ENCODE measurements at regions of chr5 and their contacts with region 1.

Region 1: DNA sequence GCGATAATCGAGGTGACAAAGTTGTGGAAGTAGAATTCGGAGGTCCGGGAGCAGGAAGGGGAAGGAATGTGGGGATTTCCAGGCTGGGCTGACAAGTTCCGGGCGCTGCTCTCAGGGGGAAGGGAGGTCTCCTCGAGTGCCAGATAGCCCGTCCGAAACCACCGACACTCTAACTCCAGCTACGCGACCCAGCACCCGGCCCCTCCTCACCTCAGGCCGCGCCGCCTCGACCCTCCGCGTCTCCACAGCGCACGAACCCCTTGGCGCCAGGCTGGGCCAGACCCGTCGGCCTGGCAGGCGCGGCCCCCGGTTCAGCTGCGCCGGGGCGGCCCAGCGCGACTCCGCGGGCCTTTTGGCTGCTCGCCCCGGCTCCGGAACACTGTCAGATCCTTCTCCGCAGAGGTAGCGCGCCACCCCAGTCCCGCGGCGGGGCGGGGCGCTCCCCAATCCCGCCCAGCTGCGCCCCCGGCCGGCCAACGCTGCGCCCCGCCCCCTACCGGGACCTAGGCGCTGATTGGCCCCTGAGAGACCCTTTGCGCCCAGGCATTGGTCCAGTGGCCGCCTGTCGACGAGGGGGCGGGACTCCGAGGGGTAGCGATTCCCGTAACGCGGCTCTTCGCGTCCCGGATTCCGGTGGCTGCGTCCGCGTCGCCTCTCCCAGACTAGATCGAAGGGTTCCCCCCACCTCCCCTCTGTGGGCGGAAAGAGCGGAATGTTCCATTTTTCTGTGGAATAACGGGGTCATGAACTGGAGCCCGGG is at the start of gene IL6ST:
- DNase-seq: peak; percentile 98
- ATAC-seq: peak; percentile 90
- H3K4me3 Mint-ChIP-seq: peak within 1 kb of the TSS; percentile 86
- H3K27ac Mint-ChIP-seq: peak within 1 kb of the TSS; percentile 97
- H3K4me1 Mint-ChIP-seq: peaks cover 60% of the 10 kb centered on the region
- H3K27me3 Mint-ChIP-seq: no peaks in the 10 kb centered on the region
- total RNA-seq, gene IL6ST: 57.1 to 64.4 TPM

Region 2: DNA sequence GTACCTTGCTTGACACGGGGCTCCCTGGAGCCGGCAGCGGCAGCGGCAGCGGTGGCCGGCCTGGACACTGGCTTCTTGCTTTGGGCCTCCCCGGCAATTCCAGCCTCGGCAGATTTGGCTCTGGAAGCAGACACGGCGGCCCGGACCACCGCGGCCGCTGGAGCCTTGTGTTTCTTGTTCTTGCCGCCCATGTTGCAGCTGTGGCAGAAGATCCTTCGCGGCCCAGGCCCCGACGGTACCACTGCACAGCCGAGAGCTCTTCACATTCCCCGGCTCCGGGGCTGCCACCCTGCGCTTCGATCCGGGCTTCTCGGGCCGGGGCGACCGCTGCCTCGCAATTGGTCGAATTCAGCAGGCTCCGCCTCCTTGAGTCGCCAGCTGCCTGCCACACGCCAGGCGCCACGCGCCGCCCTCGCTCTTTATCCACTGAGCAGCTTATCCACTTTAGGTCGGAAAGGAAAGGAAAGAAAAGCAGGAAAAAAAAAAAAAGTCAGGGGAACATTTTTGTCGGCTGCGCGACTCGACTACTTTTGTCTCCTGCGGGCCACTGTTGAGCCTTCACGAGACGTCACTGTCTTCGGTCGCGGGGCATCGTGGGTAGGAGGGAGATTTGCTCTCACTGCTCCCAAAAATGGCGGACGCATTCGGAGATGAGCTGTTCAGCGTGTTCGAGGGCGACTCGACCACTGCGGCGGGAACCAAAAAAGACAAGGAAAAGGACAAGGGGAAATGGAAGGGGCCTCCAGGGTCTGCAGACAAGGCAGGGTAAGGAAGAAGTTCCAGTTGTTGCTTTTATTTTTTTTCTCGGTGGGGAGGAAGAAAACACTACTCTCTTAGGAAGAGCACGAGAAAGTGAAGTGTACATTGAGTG is 687.1 kb before region 1 on chr5 and contains the starts of genes DHX29 and MTREX:
- CTCF ChIA-PET with region 1: no interaction called
- POLR2A ChIA-PET with region 1: no interaction called
- intact Hi-C with region 1: loop called in 1 of 2 experiments (anchors 2 kb)
- DNase-seq: peak; percentile 93
- ATAC-seq: peak; percentile 94
- H3K4me3 Mint-ChIP-seq: no peak within 1 kb of the TSS
- H3K27ac Mint-ChIP-seq: no peak within 1 kb of the TSS
- H3K4me1 Mint-ChIP-seq: peaks cover 30% of the 10 kb centered on the region
- H3K27me3 Mint-ChIP-seq: no peaks in the 10 kb centered on the region
- total RNA-seq, gene DHX29: 12.1 to 12.9 TPM
- total RNA-seq, gene MTREX: 98.2 to 106 TPM

Region 3: GRCh38 chr5:55982957-55983381 is 11.8 kb before region 1 on chr5:
- CTCF ChIA-PET with region 1: interaction called, 7 read pairs
- POLR2A ChIA-PET with region 1: interaction called, 5 read pairs
- intact Hi-C with region 1: loop called (anchors 1 to 2 kb)
- DNase-seq: peak; percentile 46
- ATAC-seq: peak; percentile 24
- H3K4me3 Mint-ChIP-seq: peak overlapping the region; percentile 37
- H3K27ac Mint-ChIP-seq: peak overlapping the region; percentile 67
- H3K4me1 Mint-ChIP-seq: peaks cover 77% of the 10 kb centered on the region
- H3K27me3 Mint-ChIP-seq: no peaks in the 10 kb centered on the region

Region 4: GRCh38 chr5:56056875-56057274 is 62.1 kb after region 1 on chr5:
- CTCF ChIA-PET with region 1: interaction called, 3 read pairs
- POLR2A ChIA-PET with region 1: interaction called, 6 read pairs
- intact Hi-C with region 1: loop called (anchors 1 to 2 kb)
- DNase-seq: no peak
- ATAC-seq: no peak
- H3K4me3 Mint-ChIP-seq: peak overlapping the region; percentile 25
- H3K27ac Mint-ChIP-seq: peak overlapping the region; percentile 66
- H3K4me1 Mint-ChIP-seq: peaks cover 73% of the 10 kb centered on the region
- H3K27me3 Mint-ChIP-seq: peaks cover 3% of the 10 kb centered on the region

Region 5: DNA sequence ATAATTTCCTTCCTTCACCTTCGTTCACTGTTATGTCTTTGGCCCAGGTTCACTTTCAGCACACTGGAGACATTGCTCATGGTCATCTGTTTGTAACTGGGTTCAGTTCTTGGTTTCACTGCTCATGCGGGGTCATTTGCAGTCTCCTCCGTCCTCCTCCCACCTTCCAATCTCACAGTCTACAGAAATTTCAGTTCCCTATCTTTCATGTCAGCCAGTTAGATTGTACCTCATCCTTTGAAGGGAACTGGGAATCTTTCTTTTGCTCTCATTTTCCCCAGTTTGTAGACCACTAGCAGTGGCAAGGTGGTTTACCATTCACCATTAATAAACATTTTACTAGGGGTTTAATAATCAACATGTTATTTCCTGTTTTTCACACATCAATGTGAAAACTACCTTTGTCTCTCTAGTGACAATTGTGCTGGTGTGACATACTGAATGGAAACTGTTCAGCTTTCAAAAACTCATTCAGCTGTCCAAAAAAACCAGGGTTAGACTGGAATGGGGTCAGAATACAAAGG is 100.9 kb after region 1 on chr5:
- CTCF ChIA-PET with region 1: interaction called, 3 read pairs
- POLR2A ChIA-PET with region 1: interaction called, 10 read pairs
- intact Hi-C with region 1: loop called (anchors 2 to 5 kb)
- DNase-seq: no peak
- ATAC-seq: no peak
- H3K4me3 Mint-ChIP-seq: peak overlapping the region; percentile 36
- H3K27ac Mint-ChIP-seq: peak overlapping the region; percentile 84
- H3K4me1 Mint-ChIP-seq: peaks cover 89% of the 10 kb centered on the region
- H3K27me3 Mint-ChIP-seq: no peaks in the 10 kb centered on the region

Region 6: DNA sequence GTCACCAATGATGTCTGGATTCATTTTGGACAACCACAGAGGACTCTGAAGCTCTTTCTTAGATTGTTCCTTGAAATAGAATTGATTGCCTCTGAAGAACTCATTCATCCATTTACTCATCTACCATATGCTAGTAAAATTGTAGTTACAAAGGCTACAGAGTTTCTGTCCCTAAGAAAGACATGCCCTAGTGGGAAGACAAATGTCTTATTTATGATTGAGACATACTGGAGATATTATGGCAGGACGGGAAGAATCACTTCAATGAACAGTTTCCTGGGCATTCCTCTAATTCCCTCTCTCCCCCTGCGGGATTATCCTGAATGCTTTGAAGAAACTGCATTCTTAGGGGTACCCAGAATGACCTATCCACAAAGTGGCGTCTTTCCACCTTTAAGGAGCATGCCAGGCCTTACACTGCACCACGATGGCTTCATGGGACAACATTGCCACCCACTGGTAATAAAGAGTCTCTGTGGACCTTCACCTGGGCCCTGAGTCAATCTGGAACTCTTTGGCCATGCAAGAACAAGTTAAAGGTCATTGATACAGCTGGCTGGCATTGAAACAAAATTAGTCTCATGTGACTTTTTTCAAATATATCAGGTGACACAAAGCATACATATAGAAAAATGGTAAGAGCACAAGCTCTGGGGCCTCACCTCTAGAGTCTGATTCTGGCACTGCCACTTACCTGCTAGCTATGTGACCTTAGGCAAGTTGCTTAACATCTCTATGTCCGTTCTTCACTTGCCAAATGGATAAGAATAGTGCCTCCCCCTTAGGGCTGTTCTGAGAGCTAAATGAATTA is 206.3 kb after region 1 on chr5:
- CTCF ChIA-PET with region 1: interaction called, 7 read pairs
- POLR2A ChIA-PET with region 1: no interaction called
- intact Hi-C with region 1: loop called in 1 of 2 experiments (anchors 2 kb)
- DNase-seq: peak; percentile 78
- ATAC-seq: peak; percentile 99
- H3K4me3 Mint-ChIP-seq: no peak overlapping the region
- H3K27ac Mint-ChIP-seq: peak overlapping the region; percentile 44
- H3K4me1 Mint-ChIP-seq: peaks cover 25% of the 10 kb centered on the region
- H3K27me3 Mint-ChIP-seq: no peaks in the 10 kb centered on the region

Region 7: GRCh38 chr5:57173185-57174127 is 1178.7 kb after region 1 on chr5 and contains the start of gene GPBP1:
- CTCF ChIA-PET with region 1: no interaction called
- POLR2A ChIA-PET with region 1: no interaction called
- intact Hi-C with region 1: loop called (anchors 1 to 10 kb)
- DNase-seq: peak; percentile 99
- ATAC-seq: peak; percentile 78
- H3K4me3 Mint-ChIP-seq: peak within 1 kb of the TSS; percentile 83
- H3K27ac Mint-ChIP-seq: peak within 1 kb of the TSS; percentile 93
- H3K4me1 Mint-ChIP-seq: peaks cover 21% of the 10 kb centered on the region
- H3K27me3 Mint-ChIP-seq: no peaks in the 10 kb centered on the region
- total RNA-seq, gene GPBP1: 91.8 to 116 TPM

Measured in activated CD4-positive, alpha-beta T cell treated with anti-CD3 and anti-CD28 coated beads for 36 hours (primary cell).